Activated CD4-positive, alpha-beta T cell treated with anti-CD3 and anti-CD28 coated beads for 36 hours (primary cell): ENCODE measurements at regions of chr1 and their contacts with region 1.

Region 1: DNA sequence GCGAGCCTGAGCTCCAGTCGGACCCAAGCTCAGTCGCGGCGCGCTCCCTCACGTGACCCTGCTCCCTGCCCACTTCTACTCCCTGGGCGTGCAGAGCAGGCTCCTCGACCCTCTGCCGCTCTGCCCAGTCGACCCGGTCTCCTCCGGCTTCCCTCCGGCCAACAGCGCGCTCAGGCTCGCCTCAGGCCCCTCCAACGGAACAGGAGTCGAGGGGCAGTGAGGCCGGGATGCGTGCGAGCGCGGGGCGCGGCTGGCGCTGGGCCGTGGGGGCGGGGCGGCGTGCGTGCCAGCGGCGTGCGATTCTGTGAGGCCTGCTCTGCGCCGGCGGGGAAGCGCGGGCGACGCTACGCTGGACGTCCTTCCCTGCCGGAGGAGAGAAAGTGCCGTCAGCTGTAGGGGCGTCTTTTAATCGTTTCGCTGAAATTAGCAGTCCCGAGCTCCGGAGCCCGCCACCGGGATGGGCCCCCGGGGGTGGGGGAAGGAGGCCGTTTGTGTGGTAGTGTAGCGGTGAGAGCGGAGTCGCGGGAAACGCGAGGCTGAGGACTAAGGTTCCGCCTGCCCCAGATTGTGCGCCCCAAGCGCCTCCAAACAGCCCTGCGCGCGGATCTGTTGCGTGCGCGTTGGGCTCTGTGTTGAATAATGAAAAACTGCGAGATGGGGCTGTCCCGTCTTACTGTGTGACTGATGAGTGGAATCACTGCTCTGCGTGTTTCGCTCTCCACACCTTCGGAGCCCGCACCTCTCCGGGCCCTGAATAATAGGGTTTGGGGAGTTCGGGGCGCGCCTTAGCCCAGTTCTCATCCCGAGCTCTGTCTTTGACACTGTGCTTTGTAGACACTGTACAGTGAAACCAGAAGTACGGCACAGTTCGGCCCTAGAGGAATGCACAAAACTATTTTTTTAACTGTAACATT is at the start of gene ACBD6:
- DNase-seq: peak; percentile 94
- ATAC-seq: peak; percentile 95
- H3K4me3 Mint-ChIP-seq: peak within 1 kb of the TSS; percentile 96
- H3K27ac Mint-ChIP-seq: peak within 1 kb of the TSS; percentile 97
- H3K4me1 Mint-ChIP-seq: peaks cover 33% of the 10 kb centered on the region
- H3K27me3 Mint-ChIP-seq: no peaks in the 10 kb centered on the region
- total RNA-seq, gene ACBD6: 45.6 to 46.8 TPM

Region 2: DNA sequence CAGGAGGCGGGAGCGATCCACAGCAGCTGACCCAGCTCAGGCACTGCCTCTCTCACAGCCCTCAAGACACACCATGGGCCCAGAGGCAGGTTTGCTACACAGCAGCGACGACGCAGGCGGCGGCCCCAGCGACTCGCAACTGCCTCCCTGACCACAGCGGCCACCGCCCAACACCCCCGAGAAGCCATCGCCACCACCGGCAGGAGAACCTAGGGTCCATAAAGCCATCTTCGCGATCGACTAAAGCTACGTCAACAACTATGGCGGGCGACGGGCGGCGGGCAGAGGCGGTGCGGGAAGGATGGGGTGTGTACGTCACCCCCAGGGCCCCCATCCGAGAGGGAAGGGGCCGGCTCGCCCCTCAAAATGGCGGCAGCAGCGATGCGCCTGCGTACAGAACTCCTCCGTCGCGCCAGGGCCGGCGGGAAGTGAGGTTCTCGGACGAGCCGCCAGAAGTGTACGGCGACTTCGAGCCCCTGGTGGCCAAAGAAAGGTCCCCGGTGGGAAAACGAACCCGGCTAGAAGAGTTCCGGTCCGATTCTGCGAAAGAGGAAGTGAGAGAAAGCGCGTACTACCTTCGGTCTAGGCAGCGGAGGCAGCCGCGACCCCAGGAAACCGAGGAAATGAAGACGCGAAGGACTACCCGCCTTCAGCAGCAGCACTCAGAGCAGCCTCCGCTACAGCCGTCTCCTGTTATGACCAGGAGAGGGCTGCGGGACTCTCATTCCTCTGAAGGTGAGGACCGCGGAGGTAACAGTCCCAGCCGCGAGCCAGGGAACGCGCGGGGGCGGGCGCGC is 620.2 kb before region 1 on chr1 and contains the start of gene TOR1AIP1:
- CTCF ChIA-PET with region 1: no interaction called
- POLR2A ChIA-PET with region 1: no interaction called
- intact Hi-C with region 1: loop called in 1 of 2 experiments (anchors 1 kb)
- DNase-seq: peak; percentile 98
- ATAC-seq: peak; percentile 80
- H3K4me3 Mint-ChIP-seq: peak within 1 kb of the TSS; percentile 87
- H3K27ac Mint-ChIP-seq: peak within 1 kb of the TSS; percentile 98
- H3K4me1 Mint-ChIP-seq: peaks cover 59% of the 10 kb centered on the region
- H3K27me3 Mint-ChIP-seq: no peaks in the 10 kb centered on the region
- total RNA-seq, gene TOR1AIP1: 50.1 to 71.6 TPM

Region 3: DNA sequence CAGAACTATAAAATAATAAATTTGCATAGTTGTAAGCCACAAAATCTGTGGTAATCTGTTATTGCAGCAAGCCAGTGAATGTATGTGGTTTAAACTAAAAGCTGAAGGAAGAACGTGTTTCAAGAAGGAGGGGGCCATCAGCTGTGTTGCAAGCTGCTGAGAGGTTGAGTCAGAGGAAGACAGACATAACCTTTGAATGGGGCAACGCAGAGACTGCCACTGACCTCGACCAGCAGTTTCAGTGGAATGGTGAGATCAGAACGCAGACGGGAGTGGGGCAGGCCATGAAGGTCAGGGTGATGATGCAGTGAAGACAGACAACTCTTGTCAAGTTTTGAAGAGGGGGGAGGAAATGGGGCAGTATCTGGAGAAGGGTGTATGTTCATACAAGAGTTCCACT is 371.1 kb before region 1 on chr1:
- CTCF ChIA-PET with region 1: no interaction called
- POLR2A ChIA-PET with region 1: no interaction called
- intact Hi-C with region 1: no loop called
- DNase-seq: peak; percentile 60
- ATAC-seq: peak; percentile 79
- H3K4me3 Mint-ChIP-seq: no peak overlapping the region
- H3K27ac Mint-ChIP-seq: peak overlapping the region; percentile 5
- H3K4me1 Mint-ChIP-seq: peaks cover 12% of the 10 kb centered on the region
- H3K27me3 Mint-ChIP-seq: peaks cover 18% of the 10 kb centered on the region

Region 4: DNA sequence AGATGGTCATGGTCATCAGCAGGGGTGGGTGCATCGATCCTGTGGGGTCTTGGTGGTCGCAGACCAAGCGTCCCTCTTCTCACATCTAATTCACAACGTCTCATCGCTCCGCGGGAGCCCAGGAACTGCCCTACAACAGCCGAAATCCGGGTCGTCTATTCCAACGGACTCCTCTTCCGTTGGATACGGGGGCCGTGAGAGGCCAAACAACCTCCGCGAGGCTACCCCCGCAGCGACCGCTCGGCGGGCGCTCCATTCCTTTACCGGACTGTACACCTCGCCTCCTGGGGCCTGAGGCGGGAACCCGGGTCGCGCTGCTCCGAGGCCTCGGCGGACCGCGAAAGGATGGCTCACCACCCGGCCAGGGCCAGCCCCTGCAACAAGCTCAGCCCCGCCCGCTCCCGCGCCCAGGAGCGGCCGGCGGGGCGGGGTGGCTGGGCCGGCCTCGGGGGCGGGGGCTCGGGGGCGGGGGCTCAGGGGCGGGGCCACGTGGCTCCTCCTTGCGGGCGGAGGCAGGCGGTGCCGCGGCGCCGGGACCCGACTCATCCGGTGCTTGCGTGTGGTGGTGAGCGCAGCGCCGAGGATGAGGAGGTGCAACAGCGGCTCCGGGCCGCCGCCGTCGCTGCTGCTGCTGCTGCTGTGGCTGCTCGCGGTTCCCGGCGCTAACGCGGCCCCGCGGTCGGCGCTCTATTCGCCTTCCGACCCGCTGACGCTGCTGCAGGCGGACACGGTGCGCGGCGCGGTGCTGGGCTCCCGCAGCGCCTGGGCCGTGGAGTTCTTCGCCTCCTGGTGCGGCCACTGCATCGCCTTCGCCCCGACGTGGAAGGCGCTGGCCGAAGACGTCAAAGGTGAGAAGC is 348.1 kb before region 1 on chr1 and contains the start of gene QSOX1:
- CTCF ChIA-PET with region 1: no interaction called
- POLR2A ChIA-PET with region 1: no interaction called
- intact Hi-C with region 1: loop called in 1 of 2 experiments (anchors 1 kb)
- DNase-seq: peak; percentile 95
- ATAC-seq: peak; percentile 97
- H3K4me3 Mint-ChIP-seq: peak within 1 kb of the TSS; percentile 90
- H3K27ac Mint-ChIP-seq: peak within 1 kb of the TSS; percentile 85
- H3K4me1 Mint-ChIP-seq: peaks cover 25% of the 10 kb centered on the region
- H3K27me3 Mint-ChIP-seq: no peaks in the 10 kb centered on the region
- total RNA-seq, gene QSOX1: 18.3 to 31.6 TPM

Region 5: DNA sequence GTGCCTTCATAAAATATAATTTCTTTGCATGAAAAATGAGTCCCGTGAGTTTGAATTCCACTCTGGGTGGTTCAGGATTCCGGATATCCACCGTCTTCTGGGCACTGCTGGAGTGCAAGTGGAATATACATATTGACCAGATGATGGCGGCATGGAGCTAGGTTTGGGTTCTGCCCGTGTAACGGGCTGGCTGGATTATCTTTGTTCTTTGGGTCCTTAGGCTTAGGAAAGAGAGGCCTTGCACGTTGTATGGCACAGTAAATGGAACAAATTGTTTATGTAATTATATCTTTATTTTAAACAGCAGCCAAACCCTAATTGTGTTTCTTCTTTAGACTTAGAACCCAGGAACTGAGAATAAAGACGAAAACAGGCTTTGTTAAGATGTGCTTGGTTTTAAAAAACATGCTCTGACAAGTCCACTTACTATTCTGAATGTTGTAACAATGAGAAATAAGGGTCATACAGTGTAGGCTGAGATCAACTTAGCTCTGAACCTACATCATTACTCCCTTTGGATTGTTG is 13.3 kb after region 1 on chr1:
- CTCF ChIA-PET with region 1: interaction called, 58 read pairs
- POLR2A ChIA-PET with region 1: no interaction called
- intact Hi-C with region 1: no loop called
- DNase-seq: peak; percentile 76
- ATAC-seq: peak; percentile 100
- H3K4me3 Mint-ChIP-seq: no peak overlapping the region
- H3K27ac Mint-ChIP-seq: no peak overlapping the region
- H3K4me1 Mint-ChIP-seq: no peaks in the 10 kb centered on the region
- H3K27me3 Mint-ChIP-seq: peaks cover 4% of the 10 kb centered on the region

Region 6: GRCh38 chr1:181014477-181015250 is 512.0 kb after region 1 on chr1:
- CTCF ChIA-PET with region 1: no interaction called
- POLR2A ChIA-PET with region 1: no interaction called
- intact Hi-C with region 1: loop called in 1 of 2 experiments (anchors 10 kb)
- DNase-seq: peak; percentile 54
- ATAC-seq: peak; percentile 78
- H3K4me3 Mint-ChIP-seq: no peak overlapping the region
- H3K27ac Mint-ChIP-seq: no peak overlapping the region
- H3K4me1 Mint-ChIP-seq: peaks cover 46% of the 10 kb centered on the region
- H3K27me3 Mint-ChIP-seq: no peaks in the 10 kb centered on the region